ENCODE measurements at regions of chr19 and their contacts with region 1.

Region 1: GRCh38 chr19:19192078-19192882 is at the starts of genes BORCS8 and RFXANK:
- DNase-seq: peak; percentile 96 to 99 (median 98)
- ATAC-seq: peak; percentile 97
- H3K4me3 ChIP-seq: peak within 1 kb of the TSS; percentile 86
- H3K27ac ChIP-seq: peak within 1 kb of the TSS; percentile 99
- H3K4me1 ChIP-seq: peaks cover 7 to 20% of the 10 kb centered on the region in 2 experiments
- H3K27me3 ChIP-seq: no peaks in the 10 kb centered on the region
- CTCF ChIP-seq: no peak
- EP300 ChIP-seq: no peak
- POLR2A ChIP-seq: peak; percentile 87
- RAD21 ChIP-seq: no peak
- polyA plus RNA-seq, gene BORCS8: 4.6 to 9.4 TPM
- polyA plus RNA-seq, gene RFXANK: 81.4 to 150 TPM

Region 2: GRCh38 chr19:18951665-18952281 is 240.5 kb before region 1 on chr19:
- CTCF ChIA-PET with region 1: no interaction called
- POLR2A ChIA-PET with region 1: no interaction called
- in situ Hi-C with region 1: no loop called
- intact Hi-C with region 1: no loop called
- DNase-seq: no peak
- ATAC-seq: no peak
- H3K4me3 ChIP-seq: no peak overlapping the region
- H3K27ac ChIP-seq: no peak overlapping the region
- H3K4me1 ChIP-seq: peaks cover 0 to 8% of the 10 kb centered on the region in 2 experiments; a peak in 2 of 5 replicates
- H3K27me3 ChIP-seq: peaks cover 0 to 13% of the 10 kb centered on the region in 2 experiments; a peak in 1 of 5 replicates
- CTCF ChIP-seq: no peak
- EP300 ChIP-seq: no peak
- POLR2A ChIP-seq: no peak
- RAD21 ChIP-seq: no peak

Region 3: GRCh38 chr19:19049406-19049805 is 142.9 kb before region 1 on chr19:
- CTCF ChIA-PET with region 1: no interaction called
- POLR2A ChIA-PET with region 1: no interaction called
- in situ Hi-C with region 1: no loop called
- intact Hi-C with region 1: no loop called
- DNase-seq: no peak
- ATAC-seq: no peak
- H3K4me3 ChIP-seq: no peak overlapping the region
- H3K27ac ChIP-seq: no peak overlapping the region
- H3K4me1 ChIP-seq: peaks cover 0 to 17% of the 10 kb centered on the region in 2 experiments; a peak in 2 of 5 replicates
- H3K27me3 ChIP-seq: no peaks in the 10 kb centered on the region
- CTCF ChIP-seq: no peak
- EP300 ChIP-seq: no peak
- POLR2A ChIP-seq: 0 out of 2 replicates have a peak, but pooled peaks have one; percentile 29
- RAD21 ChIP-seq: no peak

Region 4: DNA sequence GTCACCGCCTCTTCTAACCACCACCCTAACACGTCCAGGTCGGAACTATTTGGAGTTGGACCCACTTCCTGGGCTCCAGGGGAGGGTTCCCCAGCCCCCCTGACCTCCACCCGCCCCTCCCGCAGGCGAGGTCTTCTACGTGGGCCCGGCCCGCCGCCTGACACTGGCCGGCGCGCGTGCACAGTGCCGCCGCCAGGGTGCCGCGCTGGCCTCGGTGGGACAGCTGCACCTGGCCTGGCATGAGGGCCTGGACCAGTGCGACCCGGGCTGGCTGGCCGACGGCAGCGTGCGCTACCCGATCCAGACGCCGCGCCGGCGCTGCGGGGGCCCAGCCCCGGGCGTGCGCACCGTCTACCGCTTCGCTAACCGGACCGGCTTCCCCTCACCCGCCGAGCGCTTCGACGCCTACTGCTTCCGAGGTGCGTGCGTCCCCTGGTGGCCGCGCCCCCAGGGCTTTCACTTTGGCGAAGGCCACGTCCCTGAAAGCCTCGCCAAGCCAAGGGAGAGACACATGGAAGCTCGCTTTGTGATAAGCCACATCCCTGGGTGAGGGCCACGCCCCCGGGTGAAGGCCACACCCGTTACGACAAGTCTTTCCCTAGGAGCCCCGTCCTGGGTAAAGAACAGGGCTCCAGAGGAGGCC is 32.7 kb after region 1 on chr19:
- CTCF ChIA-PET with region 1: no interaction called
- POLR2A ChIA-PET with region 1: interaction called, 4 read pairs
- in situ Hi-C with region 1: no loop called
- intact Hi-C with region 1: loop called (anchors 1 kb)
- DNase-seq: peak; percentile 96 to 97 (median 96)
- ATAC-seq: peak; percentile 96
- H3K4me3 ChIP-seq: peak overlapping the region; percentile 37
- H3K27ac ChIP-seq: no peak overlapping the region
- H3K4me1 ChIP-seq: peaks cover 3 to 25% of the 10 kb centered on the region in 2 experiments; a peak in 4 of 5 replicates
- H3K27me3 ChIP-seq: peaks cover 5 to 48% of the 10 kb centered on the region in 2 experiments; a peak in 3 of 5 replicates
- CTCF ChIP-seq: peak; percentile 88 to 91 (median 90)
- EP300 ChIP-seq: 0 out of 2 replicates have a peak, but pooled peaks have one; percentile 16
- POLR2A ChIP-seq: no peak
- RAD21 ChIP-seq: peak; percentile 76 to 83

Region 5: GRCh38 chr19:19297759-19298158 is 105.5 kb after region 1 on chr19:
- CTCF ChIA-PET with region 1: no interaction called
- POLR2A ChIA-PET with region 1: no interaction called
- in situ Hi-C with region 1: no loop called
- intact Hi-C with region 1: no loop called
- DNase-seq: peak in 2 of 4 experiments; percentile 7 to 12
- ATAC-seq: peak; percentile 54
- H3K4me3 ChIP-seq: no peak overlapping the region
- H3K27ac ChIP-seq: no peak overlapping the region
- H3K4me1 ChIP-seq: peaks cover 0 to 6% of the 10 kb centered on the region in 2 experiments; a peak in 2 of 5 replicates
- H3K27me3 ChIP-seq: no peaks in the 10 kb centered on the region
- CTCF ChIP-seq: no peak
- EP300 ChIP-seq: no peak
- POLR2A ChIP-seq: no peak
- RAD21 ChIP-seq: no peak

Region 6: GRCh38 chr19:19320362-19321142 is 128.3 kb after region 1 on chr19 and contains the starts of genes MAU2 and SUGP1:
- CTCF ChIA-PET with region 1: interaction called, 3 read pairs
- POLR2A ChIA-PET with region 1: interaction called, 5 read pairs
- in situ Hi-C with region 1: no loop called
- intact Hi-C with region 1: loop called (anchors 2 kb)
- DNase-seq: peak; percentile 90 to 94 (median 92)
- ATAC-seq: peak; percentile 96
- H3K4me3 ChIP-seq: peak within 1 kb of the TSS; percentile 95
- H3K27ac ChIP-seq: peak within 1 kb of the TSS; percentile 100
- H3K4me1 ChIP-seq: peaks cover 6 to 22% of the 10 kb centered on the region in 2 experiments; a peak in 4 of 5 replicates
- H3K27me3 ChIP-seq: no peaks in the 10 kb centered on the region
- CTCF ChIP-seq: peak; percentile 30 to 39 (median 32); a peak in 3 of 6 replicates
- EP300 ChIP-seq: no peak; the same call in 1 of the 2 replicates
- POLR2A ChIP-seq: peak; percentile 84
- RAD21 ChIP-seq: peak in 1 of 2 experiments; percentile 26; a peak in 1 of 4 replicates
- polyA plus RNA-seq, gene MAU2: 1.2 to 1.4 TPM
- polyA plus RNA-seq, gene SUGP1: 1.0 to 1.9 TPM